HEK293 (cell line): ENCODE measurements at regions of chr11 and their contacts with region 1.

Region 1: DNA sequence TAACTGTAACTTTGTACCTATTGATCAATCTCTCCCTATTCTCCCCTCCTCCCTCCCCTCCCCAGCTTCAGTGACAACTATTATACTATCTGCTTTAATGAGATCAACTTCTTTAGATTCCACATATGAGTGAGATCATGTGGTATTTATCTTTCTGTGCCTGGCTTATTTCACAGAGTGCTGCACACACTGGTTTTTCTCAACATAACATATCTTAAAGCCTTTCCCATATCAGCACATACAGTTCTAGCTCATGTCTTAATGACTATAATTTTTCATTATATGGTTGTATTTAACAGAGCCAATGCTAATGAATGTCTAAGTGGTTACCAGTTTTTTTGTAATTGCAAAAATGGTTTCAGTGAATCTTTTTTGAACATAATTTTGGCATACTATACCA is 340.3 kb upstream of the DDI1 start:
- H3K4me3 ChIP-seq: no peak overlapping the region
- H3K27ac ChIP-seq: no peak overlapping the region
- H3K4me1 ChIP-seq: no peaks in the 10 kb centered on the region
- CTCF ChIP-seq: no peak

Region 2: GRCh38 chr11:103682318-103683184 is 13.6 kb before region 1 on chr11:
- CTCF ChIA-PET with region 1: interaction called, 17 read pairs
- POLR2A ChIA-PET with region 1: no interaction called
- H3K4me3 ChIP-seq: no peak overlapping the region
- H3K27ac ChIP-seq: no peak overlapping the region
- H3K4me1 ChIP-seq: no peaks in the 10 kb centered on the region
- CTCF ChIP-seq: peak; percentile 53; the same call in 1 of the 2 replicates